Lower leg skin (tissue), 4 donors: ENCODE measurements at regions of chr11 and their contacts with region 1.

Region 1: DNA sequence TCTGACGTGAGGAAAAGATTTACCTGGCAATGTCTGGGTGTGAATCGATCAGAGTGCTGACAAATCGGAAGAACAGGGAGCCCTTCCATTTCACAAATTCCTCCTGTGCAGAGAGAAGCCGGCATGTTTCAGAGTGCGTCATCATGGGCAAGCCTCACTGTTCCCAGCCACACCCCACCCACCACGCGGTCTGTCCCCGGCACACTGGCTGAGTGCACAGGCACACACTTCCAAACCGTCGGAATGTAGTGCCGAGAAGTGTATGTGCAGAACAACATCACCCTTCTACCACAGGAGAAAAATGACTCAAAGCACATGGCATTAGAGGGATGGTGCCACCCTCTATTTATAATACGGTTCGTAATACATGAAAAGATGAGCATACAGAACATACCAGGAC is 47.5 kb downstream of the NCAPD3 start:
- DNase-seq: no peak
- H3K4me3 ChIP-seq: no peak overlapping the region
- CTCF ChIP-seq: no peak
- POLR2A ChIP-seq: no peak

Region 2: GRCh38 chr11:134004496-134005172 is 171.7 kb before region 1 on chr11:
- intact Hi-C with region 1: no loop called
- DNase-seq: no peak
- H3K4me3 ChIP-seq: no peak overlapping the region
- CTCF ChIP-seq: no peak
- POLR2A ChIP-seq: no peak

Region 3: GRCh38 chr11:134802121-134802520 is 625.8 kb after region 1 on chr11:
- intact Hi-C with region 1: loop called (anchors 5 kb)
- DNase-seq: no peak
- H3K4me3 ChIP-seq: no peak overlapping the region
- CTCF ChIP-seq: no peak
- POLR2A ChIP-seq: no peak